ENCODE measurements at regions of chr6 and their contacts with region 1.

Region 1: GRCh38 chr6:32190054-32190851 is at the start of gene PBX2:
- DNase-seq: peak; percentile 90
- ATAC-seq: peak; percentile 64
- H3K4me3 Mint-ChIP-seq: peak within 1 kb of the TSS; percentile 97
- H3K27ac Mint-ChIP-seq: peak within 1 kb of the TSS; percentile 99
- H3K4me1 Mint-ChIP-seq: peaks cover 55% of the 10 kb centered on the region
- H3K27me3 Mint-ChIP-seq: no peaks in the 10 kb centered on the region
- CTCF ChIP-seq: no peak
- total RNA-seq, gene PBX2: 59.6 to 64.2 TPM

Region 2: GRCh38 chr6:32177788-32178546 is 12.3 kb before region 1 on chr6 and contains the start of gene RNF5:
- CTCF ChIA-PET with region 1: interaction called, 5 read pairs
- POLR2A ChIA-PET with region 1: interaction called, 72 read pairs
- intact Hi-C with region 1: loop called (anchors 2 kb)
- DNase-seq: peak; percentile 98
- ATAC-seq: peak; percentile 88
- H3K4me3 Mint-ChIP-seq: peak within 1 kb of the TSS; percentile 94
- H3K27ac Mint-ChIP-seq: peak within 1 kb of the TSS; percentile 96
- H3K4me1 Mint-ChIP-seq: peaks cover 66% of the 10 kb centered on the region
- H3K27me3 Mint-ChIP-seq: no peaks in the 10 kb centered on the region
- CTCF ChIP-seq: no peak
- total RNA-seq, gene RNF5: 55.4 to 57.9 TPM

Region 3: GRCh38 chr6:32212076-32212760 is 22.0 kb after region 1 on chr6:
- CTCF ChIA-PET with region 1: no interaction called
- POLR2A ChIA-PET with region 1: no interaction called
- intact Hi-C with region 1: no loop called
- DNase-seq: no peak
- ATAC-seq: no peak
- H3K4me3 Mint-ChIP-seq: no peak overlapping the region
- H3K27ac Mint-ChIP-seq: no peak overlapping the region
- H3K4me1 Mint-ChIP-seq: no peaks in the 10 kb centered on the region
- H3K27me3 Mint-ChIP-seq: no peaks in the 10 kb centered on the region
- CTCF ChIP-seq: no peak

Region 4: DNA sequence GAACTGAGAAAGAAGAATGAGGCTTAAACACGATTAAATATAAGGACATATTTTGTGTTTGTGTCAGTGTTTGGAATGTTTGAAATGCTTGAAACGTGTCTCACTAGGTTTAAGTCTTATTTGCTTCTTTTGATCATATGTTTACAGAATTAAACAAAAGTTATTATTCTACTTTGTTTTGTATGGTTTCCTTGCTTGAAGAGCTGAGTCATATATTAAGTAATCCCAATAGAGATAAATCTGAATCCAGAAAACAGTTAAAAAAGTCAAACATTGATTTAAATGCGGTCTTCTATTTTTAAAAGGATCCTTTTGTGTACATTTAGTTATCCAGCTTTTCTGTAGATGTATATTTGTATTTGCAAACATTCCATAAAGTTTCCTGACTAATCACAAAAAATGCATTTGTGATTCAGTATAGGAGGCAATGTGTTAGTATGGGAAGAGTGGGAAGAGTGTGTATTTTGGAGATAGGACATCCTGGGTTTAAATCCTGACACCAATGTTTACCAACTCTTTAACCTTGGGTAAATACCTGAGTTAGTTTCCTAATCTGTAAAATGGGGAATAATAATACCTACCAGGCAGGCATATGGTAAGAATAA is 108.5 kb after region 1 on chr6:
- CTCF ChIA-PET with region 1: no interaction called
- POLR2A ChIA-PET with region 1: no interaction called
- intact Hi-C with region 1: no loop called
- DNase-seq: no peak
- ATAC-seq: no peak
- H3K4me3 Mint-ChIP-seq: no peak overlapping the region
- H3K27ac Mint-ChIP-seq: no peak overlapping the region
- H3K4me1 Mint-ChIP-seq: peaks cover under 1% of the 10 kb centered on the region
- H3K27me3 Mint-ChIP-seq: peaks cover 5% of the 10 kb centered on the region
- CTCF ChIP-seq: no peak

Region 5: DNA sequence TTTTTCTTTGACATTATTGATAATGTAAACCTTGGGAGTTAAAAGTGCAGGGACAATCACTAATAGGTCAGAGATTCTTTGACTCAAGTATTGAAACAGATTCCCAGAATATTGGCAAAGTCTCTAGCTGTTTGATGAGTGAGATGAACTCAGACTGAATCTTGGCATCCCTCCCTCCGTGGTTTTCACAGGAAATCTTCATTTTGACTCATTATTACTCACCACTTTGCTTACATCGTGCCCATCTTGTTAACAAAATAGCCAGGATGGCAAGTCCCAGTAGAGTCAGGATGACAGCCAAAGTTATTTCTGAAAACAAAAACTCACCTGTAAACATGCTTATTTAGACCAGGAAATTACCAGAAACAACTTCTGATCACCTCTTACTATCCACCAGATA is 179.4 kb after region 1 on chr6:
- CTCF ChIA-PET with region 1: no interaction called
- POLR2A ChIA-PET with region 1: no interaction called
- intact Hi-C with region 1: no loop called
- DNase-seq: peak; percentile 31
- ATAC-seq: no peak
- H3K4me3 Mint-ChIP-seq: no peak overlapping the region
- H3K27ac Mint-ChIP-seq: no peak overlapping the region
- H3K4me1 Mint-ChIP-seq: peaks cover 5% of the 10 kb centered on the region
- H3K27me3 Mint-ChIP-seq: peaks cover 36% of the 10 kb centered on the region
- CTCF ChIP-seq: no peak

Measured in activated CD8-positive, alpha-beta T cell treated with anti-CD3 and anti-CD28 coated beads for 36 hours (primary cell).